IMR-90 (cell line): ENCODE measurements at regions of chr6 and their contacts with region 1.

Region 1: DNA sequence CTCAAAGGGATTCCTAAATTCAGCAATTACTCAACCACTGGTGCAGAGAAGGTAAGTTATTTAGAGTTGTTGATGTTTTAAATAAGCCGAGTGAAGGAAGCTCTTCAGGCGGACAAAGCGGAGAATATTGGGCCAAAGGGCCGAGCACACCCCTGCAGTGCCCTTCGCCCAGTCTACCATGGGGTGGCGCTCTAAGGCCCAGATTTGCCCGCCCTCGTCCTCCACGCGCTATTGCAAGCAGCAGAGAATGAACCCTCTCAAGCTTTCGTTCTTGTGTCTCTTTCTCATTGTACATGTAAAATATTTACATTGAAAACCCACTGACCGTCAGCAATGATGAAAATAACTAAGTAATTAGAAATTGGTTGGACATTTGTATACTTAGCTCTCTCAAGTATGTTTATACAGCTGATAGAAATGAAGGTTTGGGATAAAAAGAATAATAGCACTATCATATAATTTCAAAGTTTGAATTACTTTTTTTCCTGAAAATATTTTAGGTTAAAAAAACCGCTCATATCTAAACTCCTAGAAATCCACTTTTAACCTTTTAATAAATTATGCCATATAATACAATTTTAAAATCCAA is 195.0 kb upstream of the CEP162 start:
- DNase-seq: peak; percentile 41
- ATAC-seq: peak; percentile 93
- H3K4me3 ChIP-seq: no peak overlapping the region
- H3K27ac ChIP-seq: no peak overlapping the region
- H3K4me1 ChIP-seq: no peaks in the 10 kb centered on the region
- H3K27me3 ChIP-seq: peaks cover 5% of the 10 kb centered on the region
- CTCF ChIP-seq: peak; percentile 84
- POLR2A ChIP-seq: no peak
- RAD21 ChIP-seq: peak; percentile 89

Region 2: DNA sequence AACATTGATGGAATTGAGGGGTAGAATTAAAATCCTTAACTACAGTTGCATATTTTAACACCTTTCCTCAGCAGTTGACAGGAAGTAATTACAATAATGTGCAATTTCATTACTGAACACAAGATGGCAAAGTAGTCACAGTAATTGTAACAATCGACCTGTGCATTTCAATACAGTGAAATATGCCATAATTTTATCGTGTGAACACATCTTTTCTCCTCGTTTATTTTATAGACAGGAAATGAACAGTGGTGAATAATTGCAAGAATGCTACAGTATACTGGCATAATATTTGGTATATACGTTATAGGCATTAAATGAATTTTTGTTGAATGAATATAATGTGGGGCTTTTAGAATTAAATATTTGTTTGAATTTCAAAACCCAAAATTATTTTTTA is 538.0 kb before region 1 on chr6:
- CTCF ChIA-PET with region 1: no interaction called
- POLR2A ChIA-PET with region 1: no interaction called
- dilution Hi-C with region 1: no loop called
- in situ Hi-C with region 1: no loop called
- intact Hi-C with region 1: loop called (anchors 2 kb)
- DNase-seq: peak; percentile 58
- ATAC-seq: peak; percentile 75
- H3K4me3 ChIP-seq: no peak overlapping the region
- H3K27ac ChIP-seq: no peak overlapping the region
- H3K4me1 ChIP-seq: no peaks in the 10 kb centered on the region
- H3K27me3 ChIP-seq: no peaks in the 10 kb centered on the region
- CTCF ChIP-seq: peak; percentile 76
- POLR2A ChIP-seq: no peak
- RAD21 ChIP-seq: peak; percentile 83

Region 3: DNA sequence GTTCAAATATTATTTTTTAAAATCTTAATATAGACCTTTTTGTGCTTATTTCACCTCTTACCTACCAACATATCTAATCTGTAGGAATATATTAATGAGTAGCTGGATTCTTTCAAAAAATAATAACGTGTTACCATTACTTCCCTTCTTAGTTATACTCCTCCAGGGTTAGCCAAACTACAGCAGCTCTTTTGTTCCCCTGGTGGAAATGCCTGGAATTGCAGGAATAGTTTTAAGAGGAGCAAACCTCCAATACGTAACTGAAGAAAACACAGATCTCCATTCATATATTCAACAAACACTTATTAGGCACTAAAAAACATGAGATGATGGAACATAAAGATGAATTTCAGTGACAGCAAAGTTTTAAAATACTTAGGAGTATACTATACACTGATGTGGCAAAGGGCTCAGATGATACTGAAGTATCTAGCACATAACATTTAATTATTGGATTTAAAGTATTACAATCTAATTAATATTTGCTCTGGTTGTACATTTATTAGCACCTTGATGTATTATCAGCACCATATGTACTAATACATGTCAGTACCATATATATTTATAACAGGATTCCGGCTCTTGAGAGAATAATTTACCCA is 263.6 kb after region 1 on chr6:
- CTCF ChIA-PET with region 1: no interaction called
- POLR2A ChIA-PET with region 1: no interaction called
- dilution Hi-C with region 1: no loop called
- in situ Hi-C with region 1: no loop called
- intact Hi-C with region 1: loop called (anchors 5 kb)
- DNase-seq: peak; percentile 16
- ATAC-seq: no peak
- H3K4me3 ChIP-seq: no peak overlapping the region
- H3K27ac ChIP-seq: no peak overlapping the region
- H3K4me1 ChIP-seq: no peaks in the 10 kb centered on the region
- H3K27me3 ChIP-seq: peaks cover 5% of the 10 kb centered on the region; the same call in 1 of the 2 replicates
- CTCF ChIP-seq: peak; percentile 57
- POLR2A ChIP-seq: no peak
- RAD21 ChIP-seq: peak; percentile 70

Region 4: DNA sequence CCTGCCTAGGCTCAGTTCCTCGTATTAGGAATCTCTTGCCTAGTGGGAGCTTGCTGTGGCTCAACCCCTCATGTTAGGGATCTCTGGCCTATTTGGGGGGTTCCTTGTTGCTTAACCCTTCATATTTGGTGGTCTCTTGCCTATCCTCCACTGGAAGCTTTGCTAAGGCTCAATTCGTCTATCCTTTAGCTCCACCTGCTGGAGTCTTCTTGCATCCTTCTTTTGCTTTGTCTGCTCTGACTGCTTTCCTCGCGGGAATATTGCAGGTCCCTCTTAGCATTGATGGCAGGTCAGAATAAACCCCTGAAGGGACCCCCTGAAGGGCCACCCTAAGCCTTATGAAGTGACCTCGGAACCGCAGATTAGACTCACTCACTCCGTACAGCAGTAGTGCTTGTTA is 544.9 kb after region 1 on chr6:
- CTCF ChIA-PET with region 1: no interaction called
- POLR2A ChIA-PET with region 1: no interaction called
- dilution Hi-C with region 1: no loop called
- in situ Hi-C with region 1: no loop called
- intact Hi-C with region 1: loop called (anchors 2 kb)
- DNase-seq: peak; percentile 15
- ATAC-seq: no peak
- H3K4me3 ChIP-seq: no peak overlapping the region
- H3K27ac ChIP-seq: no peak overlapping the region
- H3K4me1 ChIP-seq: no peaks in the 10 kb centered on the region
- H3K27me3 ChIP-seq: no peaks in the 10 kb centered on the region
- CTCF ChIP-seq: peak; percentile 49
- POLR2A ChIP-seq: no peak
- RAD21 ChIP-seq: peak; percentile 58

Region 5: DNA sequence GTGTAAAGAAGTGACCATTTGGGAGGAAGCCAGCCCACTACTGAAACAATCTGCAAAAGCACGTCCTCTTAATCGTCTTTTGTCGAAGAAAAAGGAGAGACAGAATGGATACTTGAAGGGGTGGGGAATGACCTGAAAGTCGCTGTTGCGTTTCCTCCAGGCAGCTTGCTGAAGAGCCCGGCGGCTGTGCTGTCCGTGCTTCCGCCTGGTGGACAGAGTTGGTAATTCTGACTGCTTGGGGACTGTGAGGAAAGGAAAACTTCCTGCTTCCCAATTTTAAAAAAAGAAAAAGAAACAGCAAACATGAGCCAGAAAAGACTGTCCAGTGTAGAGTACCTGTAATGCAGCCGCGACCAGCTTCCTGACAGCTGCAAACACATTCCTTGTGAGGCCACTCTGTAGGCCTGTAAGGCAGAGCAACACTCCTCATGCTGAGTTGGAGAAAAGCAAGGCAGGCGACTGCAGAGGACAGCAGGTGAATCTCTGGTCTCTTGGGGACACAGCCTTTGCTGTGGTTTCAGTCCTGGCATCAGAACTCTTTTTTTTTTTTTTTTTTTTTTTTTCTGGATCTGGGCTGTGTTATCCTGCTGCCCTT is 593.0 kb after region 1 on chr6:
- CTCF ChIA-PET with region 1: interaction called, 3 read pairs
- POLR2A ChIA-PET with region 1: no interaction called
- dilution Hi-C with region 1: no loop called
- in situ Hi-C with region 1: no loop called
- intact Hi-C with region 1: loop called (anchors 1 kb)
- DNase-seq: peak; percentile 42
- ATAC-seq: peak; percentile 92
- H3K4me3 ChIP-seq: no peak overlapping the region
- H3K27ac ChIP-seq: no peak overlapping the region
- H3K4me1 ChIP-seq: no peaks in the 10 kb centered on the region
- H3K27me3 ChIP-seq: peaks cover 2% of the 10 kb centered on the region; the same call in 1 of the 2 replicates
- CTCF ChIP-seq: peak; percentile 67
- POLR2A ChIP-seq: no peak
- RAD21 ChIP-seq: peak; percentile 52